ENCODE measurements at regions of chr2 and their contacts with region 1.

Region 1: GRCh38 chr2:229586746-229587705 is 127.3 kb downstream of the DNER start:
- DNase-seq: peak; percentile 88
- H3K4me3 ChIP-seq: peak overlapping the region; percentile 65
- H3K27ac ChIP-seq: no peak overlapping the region
- H3K4me1 ChIP-seq: peaks cover 6% of the 10 kb centered on the region; the same call in 1 of the 2 replicates
- H3K27me3 ChIP-seq: no peaks in the 10 kb centered on the region; the same call in 1 of the 2 replicates

Region 2: GRCh38 chr2:229133155-229133772 is 453.8 kb before region 1 on chr2:
- in situ Hi-C with region 1: loop called (anchors 10 kb)
- DNase-seq: peak; percentile 59
- H3K4me3 ChIP-seq: no peak overlapping the region
- H3K27ac ChIP-seq: no peak overlapping the region
- H3K4me1 ChIP-seq: peaks cover 10% of the 10 kb centered on the region
- H3K27me3 ChIP-seq: no peaks in the 10 kb centered on the region

Region 3: GRCh38 chr2:229392196-229392595 is 194.8 kb before region 1 on chr2:
- in situ Hi-C with region 1: no loop called
- DNase-seq: peak; percentile 45
- H3K4me3 ChIP-seq: no peak overlapping the region
- H3K27ac ChIP-seq: no peak overlapping the region
- H3K4me1 ChIP-seq: peaks cover 4% of the 10 kb centered on the region; the same call in 1 of the 2 replicates
- H3K27me3 ChIP-seq: no peaks in the 10 kb centered on the region; the same call in 1 of the 2 replicates

Region 4: DNA sequence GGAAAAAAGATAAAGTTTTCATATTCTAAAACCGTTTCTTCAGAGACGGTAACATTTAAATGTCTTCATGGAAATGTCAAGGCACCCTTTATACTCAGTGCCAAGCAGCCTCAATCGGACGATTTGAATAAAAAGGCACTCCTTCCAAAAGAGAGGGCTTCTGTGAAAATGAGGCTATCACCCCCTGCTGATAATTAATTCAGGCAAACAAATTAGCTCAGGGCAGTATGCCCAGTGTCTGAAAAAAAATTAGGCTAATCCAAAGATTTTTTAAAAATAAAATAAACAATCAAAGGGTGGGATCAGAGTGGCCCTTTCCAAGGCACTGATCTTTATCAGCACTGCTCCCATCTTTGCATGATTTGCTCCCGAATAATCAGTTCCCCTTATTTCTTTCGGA is 165.0 kb before region 1 on chr2:
- in situ Hi-C with region 1: loop called (anchors 10 kb)
- DNase-seq: no peak
- H3K4me3 ChIP-seq: no peak overlapping the region
- H3K27ac ChIP-seq: no peak overlapping the region
- H3K4me1 ChIP-seq: peaks cover under 1% of the 10 kb centered on the region; the same call in 1 of the 2 replicates
- H3K27me3 ChIP-seq: no peaks in the 10 kb centered on the region

Region 5: DNA sequence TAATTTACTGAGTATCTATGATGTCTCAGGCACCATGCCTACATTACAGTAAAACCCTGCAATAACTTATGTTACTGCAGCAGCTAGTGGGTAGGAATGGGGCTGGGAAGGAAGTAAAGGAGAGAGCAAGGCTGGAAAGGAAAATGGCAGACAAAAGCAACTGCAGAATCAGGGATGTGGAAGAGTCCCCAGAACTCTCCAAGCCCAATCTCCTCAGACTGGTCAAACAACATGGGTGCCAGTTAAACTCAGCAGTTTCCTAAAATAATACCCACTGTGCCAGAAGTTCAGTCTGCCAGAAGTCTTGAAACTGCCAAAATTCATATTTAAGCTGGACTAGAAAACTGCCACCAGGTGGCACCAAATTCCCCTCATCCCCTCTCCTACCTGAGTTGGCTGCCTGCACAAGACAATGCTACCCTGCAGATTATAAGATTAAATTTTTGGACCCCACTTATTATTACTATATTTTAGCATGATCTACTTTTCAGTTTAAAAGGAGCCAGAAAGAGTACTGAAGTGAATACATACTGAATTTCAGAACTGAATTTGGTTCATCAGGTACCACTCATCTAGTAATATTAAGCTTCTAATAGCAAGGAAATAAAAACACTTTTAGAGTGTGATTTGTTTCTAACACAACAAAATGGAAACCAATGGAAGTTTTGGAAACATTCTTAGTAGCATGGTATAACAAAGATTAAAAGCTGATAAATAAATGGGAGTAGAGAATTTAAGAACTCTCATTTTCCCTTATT is 214.2 kb after region 1 on chr2:
- in situ Hi-C with region 1: no loop called
- DNase-seq: peak; percentile 69
- H3K4me3 ChIP-seq: no peak overlapping the region
- H3K27ac ChIP-seq: no peak overlapping the region
- H3K4me1 ChIP-seq: no peaks in the 10 kb centered on the region
- H3K27me3 ChIP-seq: no peaks in the 10 kb centered on the region

Region 6: GRCh38 chr2:230244211-230244610 is 657.2 kb after region 1 on chr2:
- in situ Hi-C with region 1: no loop called
- DNase-seq: no peak
- H3K4me3 ChIP-seq: no peak overlapping the region
- H3K27ac ChIP-seq: no peak overlapping the region
- H3K4me1 ChIP-seq: no peaks in the 10 kb centered on the region
- H3K27me3 ChIP-seq: no peaks in the 10 kb centered on the region; the same call in 1 of the 2 replicates

Measured in GM23248 (cell line).